Caco-2 (cell line): ENCODE measurements at regions of chr1 and their contacts with region 1.

Region 1: DNA sequence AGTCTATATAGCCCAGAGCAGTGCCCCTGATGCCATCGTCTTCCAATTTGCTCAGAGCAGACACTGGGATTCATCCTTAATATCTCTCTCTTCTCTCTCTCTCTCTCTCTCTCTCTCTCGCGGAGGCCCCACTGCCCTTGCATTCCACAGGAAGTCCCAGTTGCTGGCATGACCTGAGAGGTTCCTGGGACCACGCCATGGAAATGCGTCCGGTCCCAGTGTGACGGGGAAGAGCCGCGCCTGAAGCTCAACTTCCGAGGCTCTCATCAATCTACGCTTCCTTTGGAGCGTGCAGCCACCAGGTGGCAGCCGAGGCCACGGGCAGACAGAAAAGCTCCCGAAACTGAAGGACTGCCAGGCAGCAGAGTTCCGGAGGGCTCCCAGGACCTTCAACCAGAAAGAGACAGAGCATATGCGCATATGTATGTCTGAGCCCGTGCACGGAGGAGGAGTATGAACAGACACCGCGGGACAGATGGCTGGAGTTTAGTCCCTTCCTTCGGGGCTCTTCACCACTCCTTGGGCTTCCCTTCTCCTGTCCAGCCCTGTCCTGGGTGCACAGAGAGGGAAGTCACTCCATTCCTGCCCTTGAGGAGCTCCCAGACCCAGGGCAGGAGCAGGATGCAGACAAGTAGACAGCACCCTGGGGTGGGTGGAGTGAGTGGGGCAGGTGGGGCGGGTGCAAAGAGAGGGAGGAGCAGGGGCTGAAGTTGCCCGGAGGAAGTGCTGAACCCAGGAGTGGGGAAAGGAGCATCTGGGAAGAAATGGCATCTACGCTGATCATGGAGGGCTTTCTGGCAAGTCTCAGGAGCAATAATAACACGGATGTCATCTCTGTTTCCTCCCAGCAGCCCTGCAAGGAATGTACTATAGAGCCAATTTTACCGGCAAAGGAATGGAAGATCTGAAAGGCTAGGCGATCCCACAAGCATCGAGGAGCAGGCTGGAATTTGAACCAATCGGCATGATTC is 10.5 kb downstream of the PDZK1IP1 start:
- DNase-seq: peak; percentile 93
- H3K4me3 ChIP-seq: peak overlapping the region; percentile 26
- H3K4me3 Mint-ChIP-seq: peak overlapping the region; percentile 67
- H3K27ac Mint-ChIP-seq: peak overlapping the region; percentile 80
- H3K4me1 ChIP-seq: peaks cover 22% of the 10 kb centered on the region; the same call in 1 of the 2 replicates
- H3K4me1 Mint-ChIP-seq: peaks cover 28% of the 10 kb centered on the region
- H3K27me3 ChIP-seq: no peaks in the 10 kb centered on the region
- H3K27me3 Mint-ChIP-seq: no peaks in the 10 kb centered on the region
- CTCF ChIP-seq: peak; percentile 76 to 87

Region 2: GRCh38 chr1:47257224-47257623 is 77.9 kb after region 1 on chr1:
- CTCF ChIA-PET with region 1: interaction called, 37 read pairs
- POLR2A ChIA-PET with region 1: interaction called, 4 read pairs
- intact Hi-C with region 1: no loop called
- DNase-seq: no peak
- H3K4me3 ChIP-seq: no peak overlapping the region
- H3K4me3 Mint-ChIP-seq: no peak overlapping the region
- H3K27ac Mint-ChIP-seq: no peak overlapping the region
- H3K4me1 ChIP-seq: peaks cover 26% of the 10 kb centered on the region
- H3K4me1 Mint-ChIP-seq: no peaks in the 10 kb centered on the region
- H3K27me3 ChIP-seq: no peaks in the 10 kb centered on the region
- H3K27me3 Mint-ChIP-seq: no peaks in the 10 kb centered on the region
- CTCF ChIP-seq: no peak

Region 3: GRCh38 chr1:47313915-47314664 is 134.8 kb after region 1 on chr1 and contains the start of gene STIL:
- CTCF ChIA-PET with region 1: interaction called, 11 read pairs
- POLR2A ChIA-PET with region 1: interaction called, 8 read pairs
- intact Hi-C with region 1: no loop called
- DNase-seq: peak; percentile 97 to 99
- H3K4me3 ChIP-seq: peak within 1 kb of the TSS; percentile 61
- H3K4me3 Mint-ChIP-seq: peak within 1 kb of the TSS; percentile 92
- H3K27ac Mint-ChIP-seq: peak within 1 kb of the TSS; percentile 99
- H3K4me1 ChIP-seq: no peaks in the 10 kb centered on the region
- H3K4me1 Mint-ChIP-seq: no peaks in the 10 kb centered on the region
- H3K27me3 ChIP-seq: no peaks in the 10 kb centered on the region
- H3K27me3 Mint-ChIP-seq: no peaks in the 10 kb centered on the region
- CTCF ChIP-seq: no peak
- total RNA-seq, gene STIL: 25.9 and 26.4 TPM in 2 replicates

Region 4: DNA sequence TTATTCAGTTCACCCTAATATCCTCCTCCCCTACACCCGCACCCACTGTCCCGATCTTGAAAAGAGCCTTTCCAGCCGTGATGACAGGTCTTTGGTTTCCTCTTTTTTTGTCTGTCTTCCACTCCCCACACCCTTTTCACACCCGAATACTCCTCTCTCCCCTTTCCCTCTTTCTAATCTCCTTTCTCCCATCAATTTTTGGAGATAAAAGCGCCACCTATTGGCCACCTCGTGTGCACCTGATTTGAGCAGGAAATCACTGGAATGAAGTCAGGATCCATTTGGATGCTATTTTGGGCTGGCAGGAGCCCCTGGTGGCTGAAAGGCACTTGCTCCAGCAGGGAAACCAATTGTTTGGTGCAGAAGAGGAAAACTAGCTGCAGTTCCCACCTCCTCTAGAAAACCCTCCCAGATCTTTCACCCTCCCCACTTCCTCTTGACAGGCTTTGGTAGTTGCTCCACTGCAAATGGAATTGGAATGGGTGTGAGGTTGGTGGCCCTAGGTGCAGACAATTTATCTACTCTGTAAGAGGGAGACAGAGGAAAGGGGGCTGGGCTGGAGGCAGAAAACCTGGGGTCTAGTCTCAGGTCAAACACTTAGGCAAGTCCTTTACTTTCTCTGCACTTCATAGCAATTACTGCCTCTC is 245.2 kb after region 1 on chr1:
- CTCF ChIA-PET with region 1: interaction called, 3 read pairs
- POLR2A ChIA-PET with region 1: no interaction called
- intact Hi-C with region 1: loop called (anchors 1 kb)
- DNase-seq: peak; percentile 61 to 75
- H3K4me3 ChIP-seq: no peak overlapping the region
- H3K4me3 Mint-ChIP-seq: no peak overlapping the region
- H3K27ac Mint-ChIP-seq: no peak overlapping the region
- H3K4me1 ChIP-seq: no peaks in the 10 kb centered on the region
- H3K4me1 Mint-ChIP-seq: peaks cover 7% of the 10 kb centered on the region
- H3K27me3 ChIP-seq: no peaks in the 10 kb centered on the region
- H3K27me3 Mint-ChIP-seq: no peaks in the 10 kb centered on the region
- CTCF ChIP-seq: peak; percentile 80 to 83